ENCODE measurements at regions of chr16 and their contacts with region 1.

Region 1: GRCh38 chr16:1705688-1706385 is at the start of gene MAPK8IP3:
- DNase-seq: peak; percentile 85
- H3K4me3 Mint-ChIP-seq: peak within 1 kb of the TSS; percentile 83
- H3K27ac Mint-ChIP-seq: peak within 1 kb of the TSS; percentile 87
- H3K4me1 Mint-ChIP-seq: peaks cover 18% of the 10 kb centered on the region
- H3K27me3 Mint-ChIP-seq: no peaks in the 10 kb centered on the region
- CTCF ChIP-seq: peak; percentile 90
- total RNA-seq, gene MAPK8IP3: 77.4 and 86.6 TPM in 2 replicates

Region 2: DNA sequence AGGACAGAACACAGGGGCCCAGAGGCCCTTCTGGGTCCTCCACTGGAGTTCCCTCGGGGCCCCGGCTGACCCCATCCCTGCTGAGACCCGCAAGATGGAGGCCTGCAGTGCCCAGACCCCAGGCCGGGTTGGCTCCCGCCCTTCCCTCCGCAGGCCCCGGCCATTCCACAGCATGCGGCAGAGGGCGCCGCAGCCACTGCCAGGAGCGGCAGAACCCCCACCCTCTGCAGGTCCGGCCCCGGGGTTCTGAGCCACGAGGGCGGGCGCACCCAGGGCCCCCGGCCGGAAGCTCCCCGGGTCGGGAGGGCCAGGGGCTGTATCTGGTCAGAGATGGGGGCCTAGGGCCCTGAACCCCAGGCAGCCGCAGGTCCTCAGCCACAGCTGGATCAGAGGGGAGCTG is 277.3 kb before region 1 on chr16:
- CTCF ChIA-PET with region 1: no interaction called
- POLR2A ChIA-PET with region 1: no interaction called
- intact Hi-C with region 1: loop called (anchors 10 kb)
- DNase-seq: peak; percentile 68
- H3K4me3 Mint-ChIP-seq: peak overlapping the region; percentile 73
- H3K27ac Mint-ChIP-seq: peak overlapping the region; percentile 86
- H3K4me1 Mint-ChIP-seq: no peaks in the 10 kb centered on the region
- H3K27me3 Mint-ChIP-seq: no peaks in the 10 kb centered on the region
- CTCF ChIP-seq: peak; percentile 59

Region 3: GRCh38 chr16:1610276-1611017 is 95.4 kb before region 1 on chr16:
- CTCF ChIA-PET with region 1: interaction called, 4 read pairs
- POLR2A ChIA-PET with region 1: interaction called, 36 read pairs
- intact Hi-C with region 1: loop called (anchors 5 kb)
- DNase-seq: peak; percentile 89
- H3K4me3 Mint-ChIP-seq: peak overlapping the region; percentile 85
- H3K27ac Mint-ChIP-seq: peak overlapping the region; percentile 97
- H3K4me1 Mint-ChIP-seq: peaks cover 11% of the 10 kb centered on the region
- H3K27me3 Mint-ChIP-seq: no peaks in the 10 kb centered on the region
- CTCF ChIP-seq: no peak

Region 4: GRCh38 chr16:1677802-1678496 is 27.9 kb before region 1 on chr16 and contains the start of gene JPT2:
- CTCF ChIA-PET with region 1: interaction called, 12 read pairs
- POLR2A ChIA-PET with region 1: interaction called, 80 read pairs
- intact Hi-C with region 1: loop called (anchors 1 kb)
- DNase-seq: peak; percentile 98
- H3K4me3 Mint-ChIP-seq: peak within 1 kb of the TSS; percentile 94
- H3K27ac Mint-ChIP-seq: peak within 1 kb of the TSS; percentile 80
- H3K4me1 Mint-ChIP-seq: peaks cover 26% of the 10 kb centered on the region
- H3K27me3 Mint-ChIP-seq: no peaks in the 10 kb centered on the region
- CTCF ChIP-seq: no peak
- total RNA-seq, gene JPT2: 111 and 131 TPM in 2 replicates

Region 5: DNA sequence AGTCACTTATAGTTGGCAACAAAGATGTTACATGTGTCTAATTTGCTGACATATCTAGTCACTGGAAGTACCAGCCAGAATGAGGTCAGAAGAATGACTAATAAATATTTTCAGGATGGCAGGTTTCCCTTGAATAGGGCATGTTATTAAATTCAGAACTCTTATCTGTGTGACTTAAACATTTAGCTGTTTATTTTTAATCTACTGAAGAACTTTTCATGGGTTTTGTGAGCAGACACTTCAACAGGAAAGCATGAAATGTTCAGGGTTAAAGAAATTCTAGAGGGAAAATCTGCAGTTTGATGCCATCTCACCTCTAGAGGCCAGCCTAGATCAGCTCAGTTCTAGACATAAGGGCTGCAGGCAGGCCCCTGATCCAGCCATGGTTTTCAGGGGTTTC is 14.6 kb before region 1 on chr16:
- CTCF ChIA-PET with region 1: interaction called, 35 read pairs
- POLR2A ChIA-PET with region 1: interaction called, 130 read pairs
- intact Hi-C with region 1: no loop called
- DNase-seq: peak; percentile 48
- H3K4me3 Mint-ChIP-seq: peak overlapping the region; percentile 62
- H3K27ac Mint-ChIP-seq: peak overlapping the region; percentile 97
- H3K4me1 Mint-ChIP-seq: peaks cover 51% of the 10 kb centered on the region
- H3K27me3 Mint-ChIP-seq: no peaks in the 10 kb centered on the region
- CTCF ChIP-seq: peak; percentile 33

Region 6: GRCh38 chr16:1754204-1754603 is 48.4 kb after region 1 on chr16:
- CTCF ChIA-PET with region 1: interaction called, 6 read pairs
- POLR2A ChIA-PET with region 1: interaction called, 30 read pairs
- intact Hi-C with region 1: no loop called
- DNase-seq: no peak
- H3K4me3 Mint-ChIP-seq: no peak overlapping the region
- H3K27ac Mint-ChIP-seq: peak overlapping the region; percentile 64
- H3K4me1 Mint-ChIP-seq: peaks cover 12% of the 10 kb centered on the region
- H3K27me3 Mint-ChIP-seq: no peaks in the 10 kb centered on the region
- CTCF ChIP-seq: no peak

Region 7: DNA sequence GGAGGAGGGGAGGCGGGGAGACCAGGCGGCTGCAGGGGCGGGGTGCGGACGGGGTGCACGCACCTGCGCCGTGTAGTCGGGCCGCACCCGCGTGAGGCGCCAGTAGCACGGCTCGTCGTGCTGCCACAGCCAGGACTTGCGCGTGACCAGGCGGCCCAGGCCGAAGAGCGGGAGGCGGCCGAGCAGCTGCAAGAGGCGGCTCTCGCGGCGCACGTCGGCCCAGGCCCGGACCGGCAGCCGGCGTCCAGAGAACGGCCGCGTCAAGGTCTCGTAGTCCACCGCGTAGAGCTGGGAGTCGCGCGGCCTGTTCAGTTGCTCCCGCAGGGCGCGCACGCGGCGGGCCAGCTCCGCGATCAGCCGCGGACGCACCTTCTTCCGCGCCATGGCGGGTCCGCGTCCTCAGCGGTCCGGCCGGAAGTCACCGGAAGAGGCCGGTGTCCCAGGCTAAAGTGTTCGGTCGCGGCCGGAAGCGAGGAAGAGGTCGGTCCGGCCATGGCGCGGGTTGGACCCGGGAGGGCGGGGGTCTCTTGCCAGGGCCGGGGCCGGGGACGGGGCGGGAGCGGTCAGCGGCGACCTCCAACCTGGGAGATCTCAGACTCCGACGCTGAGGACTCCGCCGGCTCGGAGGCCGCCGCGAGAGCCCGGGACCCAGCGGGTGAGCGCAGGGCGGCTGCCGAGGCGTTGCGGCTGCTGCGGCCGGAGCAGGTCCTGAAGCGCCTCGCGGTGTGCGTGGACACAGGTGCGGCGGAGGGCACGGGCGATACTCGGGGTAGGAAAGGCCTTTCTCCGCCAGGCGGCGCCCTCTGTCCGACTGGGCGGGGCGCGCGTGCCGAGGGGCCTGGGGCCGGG is 67.1 kb after region 1 on chr16 and contains the starts of genes EME2 and MRPS34:
- CTCF ChIA-PET with region 1: interaction called, 7 read pairs
- POLR2A ChIA-PET with region 1: interaction called, 57 read pairs
- intact Hi-C with region 1: loop called (anchors 1 kb)
- DNase-seq: peak; percentile 84
- H3K4me3 Mint-ChIP-seq: peak within 1 kb of the TSS; percentile 80
- H3K27ac Mint-ChIP-seq: peak within 1 kb of the TSS; percentile 80
- H3K4me1 Mint-ChIP-seq: peaks cover 7% of the 10 kb centered on the region
- H3K27me3 Mint-ChIP-seq: no peaks in the 10 kb centered on the region
- CTCF ChIP-seq: peak; percentile 92
- total RNA-seq, gene EME2: 20.6 TPM in 2 replicates
- total RNA-seq, gene MRPS34: 82.2 and 102 TPM in 2 replicates

Region 8: DNA sequence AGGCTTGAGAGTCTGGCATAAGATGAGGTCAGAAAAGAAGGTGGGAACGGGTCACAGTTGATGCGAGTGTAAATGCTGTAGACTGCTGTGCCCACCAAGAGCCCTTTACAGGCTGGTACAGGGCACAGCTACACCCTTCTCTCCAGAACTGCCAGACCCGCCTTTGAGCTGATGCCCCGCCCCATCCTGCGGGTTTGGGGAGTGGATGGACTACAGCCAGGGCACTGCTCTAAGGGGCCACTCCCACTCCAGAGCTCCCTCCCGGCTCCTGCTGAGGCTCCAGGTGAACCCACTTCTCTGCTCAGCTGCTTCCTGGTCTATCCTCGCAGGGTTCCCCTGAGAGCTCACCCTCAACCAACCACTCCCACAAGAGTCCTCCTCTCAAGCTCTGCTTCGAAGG is 153.8 kb after region 1 on chr16:
- CTCF ChIA-PET with region 1: no interaction called
- POLR2A ChIA-PET with region 1: no interaction called
- intact Hi-C with region 1: no loop called
- DNase-seq: no peak
- H3K4me3 Mint-ChIP-seq: no peak overlapping the region
- H3K27ac Mint-ChIP-seq: no peak overlapping the region
- H3K4me1 Mint-ChIP-seq: no peaks in the 10 kb centered on the region
- H3K27me3 Mint-ChIP-seq: peaks cover 45% of the 10 kb centered on the region
- CTCF ChIP-seq: no peak